HAP-1 (cell line): ENCODE measurements at regions of chr10 and their contacts with region 1.

Region 1: DNA sequence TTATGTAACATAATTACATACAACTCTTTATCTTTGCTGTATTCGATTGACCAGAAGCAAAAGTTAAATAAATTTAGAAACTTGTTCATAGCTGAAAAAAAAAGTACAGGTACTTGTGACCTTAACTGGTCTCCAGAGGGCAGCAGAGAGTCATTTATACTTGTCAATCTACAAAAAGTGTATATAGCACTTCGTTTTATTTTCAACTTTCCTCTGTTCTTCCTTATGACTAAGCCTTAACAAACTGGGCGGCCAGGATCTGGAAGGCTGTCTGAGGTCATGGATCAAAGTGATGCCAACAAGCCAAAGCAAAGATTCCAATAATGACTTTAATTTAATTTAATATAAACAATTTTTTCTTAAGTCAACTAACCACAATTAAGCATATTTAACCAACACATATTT is 29.8 kb downstream of the C10orf67 start:
- DNase-seq: peak; percentile 58 to 70
- H3K4me3 ChIP-seq: no peak overlapping the region
- H3K4me1 ChIP-seq: no peaks in the 10 kb centered on the region; the same call in 1 of the 2 replicates
- H3K27me3 ChIP-seq: no peaks in the 10 kb centered on the region

Region 2: GRCh38 chr10:22505911-22506685 is 808.7 kb before region 1 on chr10:
- in situ Hi-C with region 1: no loop called
- DNase-seq: no peak
- H3K4me3 ChIP-seq: no peak overlapping the region
- H3K4me1 ChIP-seq: peaks cover 5% of the 10 kb centered on the region; the same call in 1 of the 2 replicates
- H3K27me3 ChIP-seq: no peaks in the 10 kb centered on the region

Region 3: DNA sequence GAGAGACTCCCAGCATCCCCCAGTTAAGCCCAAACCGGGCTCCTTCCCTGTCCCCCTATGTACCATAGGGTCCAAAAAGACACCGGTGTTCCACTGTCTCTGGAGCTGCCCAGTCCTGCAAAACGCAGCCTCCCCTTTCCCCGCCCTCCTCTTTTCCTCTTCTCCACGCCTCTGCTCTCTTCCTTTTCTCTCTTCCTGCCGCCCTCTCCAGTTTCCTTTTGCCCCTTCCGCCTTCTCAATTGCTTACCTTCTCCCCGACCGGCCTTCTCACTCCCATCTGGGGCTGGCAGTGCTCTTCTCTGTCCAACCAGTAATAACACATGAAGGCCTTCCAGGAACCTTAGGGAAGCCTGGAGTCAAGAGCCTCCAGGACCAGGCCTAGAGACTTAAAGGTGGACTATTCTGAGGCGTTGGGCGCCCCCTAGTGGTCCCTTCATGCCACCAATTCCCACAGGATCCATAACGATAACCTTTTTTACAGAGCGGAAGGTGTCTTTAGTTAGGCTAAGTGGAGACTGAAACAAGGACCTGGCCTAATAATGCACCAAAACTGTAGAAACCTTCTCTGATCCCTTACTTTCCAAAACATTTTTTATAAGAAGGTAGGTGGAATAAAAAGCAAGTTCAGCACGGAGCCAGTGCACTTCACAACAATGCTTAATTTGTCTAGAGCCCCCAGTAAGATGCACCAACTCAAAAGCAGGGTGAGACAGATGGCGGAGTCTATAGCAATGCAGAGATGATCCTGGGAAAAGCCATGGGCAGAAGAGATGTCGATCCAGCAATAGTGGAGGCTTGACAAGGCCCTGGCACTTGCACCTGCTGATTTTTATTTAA is 246.7 kb before region 1 on chr10:
- in situ Hi-C with region 1: no loop called
- DNase-seq: peak; percentile 82 to 86
- H3K4me3 ChIP-seq: no peak overlapping the region
- H3K4me1 ChIP-seq: no peaks in the 10 kb centered on the region
- H3K27me3 ChIP-seq: no peaks in the 10 kb centered on the region

Region 4: GRCh38 chr10:23370106-23370505 is 55.3 kb after region 1 on chr10:
- in situ Hi-C with region 1: no loop called
- DNase-seq: no peak
- H3K4me3 ChIP-seq: no peak overlapping the region
- H3K4me1 ChIP-seq: no peaks in the 10 kb centered on the region
- H3K27me3 ChIP-seq: peaks cover 3% of the 10 kb centered on the region; the same call in 1 of the 2 replicates

Region 5: DNA sequence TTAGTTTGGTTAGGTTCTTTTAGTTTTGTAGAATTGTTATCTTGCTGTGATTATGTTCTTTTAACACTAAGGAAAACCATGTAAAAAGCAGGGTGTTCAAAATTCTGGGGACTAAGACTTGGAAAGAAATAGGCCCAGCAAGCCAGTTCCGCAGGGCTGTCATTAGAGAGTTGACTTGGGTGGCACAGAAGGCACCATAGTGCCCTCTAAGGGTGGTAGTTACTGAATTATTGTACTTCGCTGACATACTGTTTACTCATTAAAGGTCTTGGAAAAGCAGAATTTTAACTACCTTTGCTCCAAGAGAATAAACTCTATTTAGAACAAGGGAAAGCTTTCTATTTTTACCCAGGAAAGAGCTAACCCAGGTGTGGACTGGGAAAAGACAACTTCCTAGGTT is 210.6 kb after region 1 on chr10:
- in situ Hi-C with region 1: loop called (anchors 25 kb)
- DNase-seq: no peak
- H3K4me3 ChIP-seq: no peak overlapping the region
- H3K4me1 ChIP-seq: no peaks in the 10 kb centered on the region
- H3K27me3 ChIP-seq: no peaks in the 10 kb centered on the region

Region 6: GRCh38 chr10:23694446-23694920 is 379.6 kb after region 1 on chr10:
- in situ Hi-C with region 1: loop called (anchors 10 kb)
- DNase-seq: no peak
- H3K4me3 ChIP-seq: no peak overlapping the region
- H3K4me1 ChIP-seq: no peaks in the 10 kb centered on the region
- H3K27me3 ChIP-seq: peaks cover 25% of the 10 kb centered on the region

Region 7: GRCh38 chr10:24503461-24504320 is 1188.9 kb after region 1 on chr10:
- in situ Hi-C with region 1: loop called (anchors 25 kb)
- DNase-seq: peak; percentile 42 to 70
- H3K4me3 ChIP-seq: no peak overlapping the region
- H3K4me1 ChIP-seq: peaks cover 4% of the 10 kb centered on the region
- H3K27me3 ChIP-seq: no peaks in the 10 kb centered on the region